ENCODE measurements at regions of chr5 and their contacts with region 1.

Region 1: DNA sequence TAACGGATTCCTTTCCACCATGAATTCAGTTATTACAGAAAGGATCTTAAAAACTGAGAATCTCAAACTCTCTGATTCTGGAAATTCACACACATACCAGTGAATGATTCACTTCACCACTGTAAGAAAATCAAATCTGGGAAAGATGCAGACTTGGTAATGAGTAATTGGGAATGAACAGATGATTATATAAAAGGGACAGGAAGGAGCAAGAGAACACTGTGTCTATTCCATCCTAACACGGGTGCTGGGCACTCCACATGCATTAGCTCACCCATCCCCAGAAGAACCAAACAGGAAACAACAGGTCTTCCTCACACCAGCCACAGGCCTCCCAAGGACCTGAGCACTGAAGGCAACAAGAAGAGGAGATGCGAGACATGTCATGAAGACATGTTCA is 74.8 kb upstream of the ZNF622 start:
- DNase-seq: peak in 3 of 10 donors; percentile 34 to 74 (median 43)

Region 2: GRCh38 chr5:15338546-15338945 is 1201.9 kb before region 1 on chr5:
- intact Hi-C with region 1: no loop called
- DNase-seq: peak in 1 of 10 donors; percentile 74

Region 3: GRCh38 chr5:16345454-16345853 is 195.0 kb before region 1 on chr5:
- intact Hi-C with region 1: no loop called
- DNase-seq: no peak

Region 4: GRCh38 chr5:16502866-16503265 is 37.6 kb before region 1 on chr5:
- intact Hi-C with region 1: loop called (anchors 5 kb)
- DNase-seq: no peak

Region 5: GRCh38 chr5:16616536-16617273 is 76.3 kb after region 1 on chr5 and contains the start of gene RETREG1:
- intact Hi-C with region 1: loop called (anchors 5 kb)
- DNase-seq: peak; percentile 63 to 97 (median 76)

Region 6: DNA sequence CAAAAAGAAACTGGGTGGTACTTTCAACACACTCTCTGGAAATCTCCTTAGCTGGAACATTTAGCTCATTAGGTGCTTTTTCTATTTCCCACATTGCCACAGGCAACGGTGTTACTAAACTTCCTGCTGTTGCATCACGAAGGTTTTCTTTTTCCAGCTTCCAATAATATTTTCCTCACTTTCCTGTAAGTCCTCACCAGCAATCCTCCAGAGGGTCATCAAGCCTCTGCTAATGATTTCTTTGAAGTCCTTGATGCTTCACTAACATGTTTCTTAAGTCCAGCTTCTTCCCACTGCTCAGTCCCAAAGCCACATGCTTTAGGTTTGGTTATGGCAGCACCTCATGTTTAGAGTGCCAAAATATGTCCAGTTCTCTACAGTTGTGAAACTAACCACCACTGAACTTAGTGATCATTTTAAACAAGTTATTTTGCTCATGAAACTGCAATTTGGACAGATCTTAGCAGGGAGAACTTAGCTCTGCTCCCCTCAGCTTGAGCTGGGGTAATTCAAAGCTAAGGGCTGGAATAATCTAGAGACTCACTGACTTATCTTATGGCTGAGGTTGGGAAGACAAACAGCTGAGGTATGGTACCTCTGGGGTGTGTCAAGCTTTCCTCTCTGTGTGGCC is 116.3 kb after region 1 on chr5:
- intact Hi-C with region 1: no loop called
- DNase-seq: no peak

Measured in posterior cingulate gyrus (tissue), 11 donors.